Activated CD8-positive, alpha-beta T cell treated with anti-CD3 and anti-CD28 coated beads, Interleukin-2, amount 10 ng/mL, durations not matched to agents 7 days and 5 days (primary cell): ENCODE measurements at regions of chr12 and their contacts with region 1.

Region 1: GRCh38 chr12:108701779-108702441 is 29.4 kb downstream of the CORO1C start:
- DNase-seq: peak; percentile 37
- ATAC-seq: peak; percentile 79
- H3K4me3 Mint-ChIP-seq: no peak overlapping the region
- H3K27ac Mint-ChIP-seq: no peak overlapping the region
- H3K4me1 Mint-ChIP-seq: peaks cover 22% of the 10 kb centered on the region
- H3K27me3 Mint-ChIP-seq: no peaks in the 10 kb centered on the region

Region 2: GRCh38 chr12:108457006-108457733 is 244.7 kb before region 1 on chr12:
- CTCF ChIA-PET with region 1: no interaction called
- POLR2A ChIA-PET with region 1: no interaction called
- DNase-seq: peak; percentile 42
- ATAC-seq: peak; percentile 76
- H3K4me3 Mint-ChIP-seq: no peak overlapping the region
- H3K27ac Mint-ChIP-seq: no peak overlapping the region
- H3K4me1 Mint-ChIP-seq: peaks cover 7% of the 10 kb centered on the region
- H3K27me3 Mint-ChIP-seq: peaks cover 13% of the 10 kb centered on the region

Region 3: GRCh38 chr12:108629151-108629550 is 72.8 kb before region 1 on chr12:
- CTCF ChIA-PET with region 1: no interaction called
- POLR2A ChIA-PET with region 1: no interaction called
- DNase-seq: peak; percentile 41
- ATAC-seq: no peak
- H3K4me3 Mint-ChIP-seq: peak overlapping the region; percentile 100
- H3K27ac Mint-ChIP-seq: peak overlapping the region; percentile 100
- H3K4me1 Mint-ChIP-seq: peaks cover 54% of the 10 kb centered on the region
- H3K27me3 Mint-ChIP-seq: no peaks in the 10 kb centered on the region

Region 4: GRCh38 chr12:108653082-108653516 is 48.8 kb before region 1 on chr12:
- CTCF ChIA-PET with region 1: no interaction called
- POLR2A ChIA-PET with region 1: no interaction called
- DNase-seq: no peak
- ATAC-seq: no peak
- H3K4me3 Mint-ChIP-seq: no peak overlapping the region
- H3K27ac Mint-ChIP-seq: no peak overlapping the region
- H3K4me1 Mint-ChIP-seq: peaks cover 5% of the 10 kb centered on the region
- H3K27me3 Mint-ChIP-seq: no peaks in the 10 kb centered on the region

Region 5: GRCh38 chr12:108691175-108691997 is 10.5 kb before region 1 on chr12:
- CTCF ChIA-PET with region 1: interaction called, 16 read pairs
- POLR2A ChIA-PET with region 1: interaction called, 3 read pairs
- DNase-seq: peak; percentile 84
- ATAC-seq: peak; percentile 81
- H3K4me3 Mint-ChIP-seq: peak overlapping the region; percentile 64
- H3K27ac Mint-ChIP-seq: peak overlapping the region; percentile 87
- H3K4me1 Mint-ChIP-seq: peaks cover 64% of the 10 kb centered on the region
- H3K27me3 Mint-ChIP-seq: no peaks in the 10 kb centered on the region

Region 6: DNA sequence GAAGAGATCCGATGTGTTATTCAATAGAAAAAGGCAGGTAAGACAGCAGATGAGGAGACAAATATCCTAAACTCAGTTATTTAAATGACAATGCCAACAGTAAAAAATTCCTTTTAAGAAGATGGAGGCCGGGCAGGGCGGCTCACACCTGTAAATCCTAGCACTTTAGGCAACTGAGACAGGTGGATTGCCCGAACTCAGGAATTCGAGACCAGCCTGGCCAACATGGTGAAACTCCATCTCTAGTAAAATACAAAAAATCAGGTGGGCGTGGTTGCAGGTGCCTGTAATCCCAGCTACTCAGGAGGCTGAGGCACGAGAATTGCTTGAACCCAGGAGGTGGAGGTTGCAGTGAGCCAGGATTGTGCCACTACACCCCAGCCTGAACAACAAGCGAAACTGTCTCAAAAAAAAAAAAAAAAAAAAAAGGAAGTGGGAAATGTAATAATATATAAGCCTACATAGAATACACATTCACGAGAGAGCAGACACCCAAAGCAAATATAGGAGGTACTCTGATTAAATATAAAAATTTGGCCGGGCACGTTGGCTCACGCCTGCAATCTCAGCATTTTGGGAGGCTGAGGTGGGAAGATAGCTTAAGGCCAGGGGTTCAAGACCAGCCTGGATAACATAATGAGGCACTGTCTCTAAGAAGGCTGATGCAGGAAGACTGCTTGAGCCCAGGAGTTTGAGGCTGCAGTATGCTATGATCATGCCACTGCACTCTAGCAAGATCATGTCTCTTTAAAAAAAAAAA is 10.4 kb after region 1 on chr12:
- CTCF ChIA-PET with region 1: no interaction called
- POLR2A ChIA-PET with region 1: no interaction called
- DNase-seq: no peak
- ATAC-seq: no peak
- H3K4me3 Mint-ChIP-seq: no peak overlapping the region
- H3K27ac Mint-ChIP-seq: no peak overlapping the region
- H3K4me1 Mint-ChIP-seq: peaks cover 6% of the 10 kb centered on the region
- H3K27me3 Mint-ChIP-seq: no peaks in the 10 kb centered on the region